ENCODE measurements at regions of chr5 and their contacts with region 1.

Region 1: DNA sequence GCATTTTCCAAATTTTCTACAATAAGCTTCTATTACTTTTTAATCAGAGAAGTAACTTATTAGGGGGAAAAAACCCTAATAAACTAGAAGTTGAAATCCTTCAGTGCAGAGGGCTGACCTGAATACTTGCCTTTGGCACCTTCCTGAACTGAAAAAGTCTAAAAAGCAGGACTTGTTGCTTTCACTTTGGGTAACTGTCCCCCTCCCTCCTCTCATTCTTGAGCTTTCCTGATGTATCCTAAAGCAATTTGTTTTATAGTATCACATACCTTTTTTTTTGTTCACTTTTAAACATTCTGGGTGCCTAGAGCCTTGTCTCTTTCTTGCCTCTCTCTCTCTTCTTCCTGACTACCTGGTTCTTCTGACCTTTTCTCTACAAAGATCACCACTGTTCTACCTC is 64.0 kb upstream of the ERBIN start:
- DNase-seq: no peak
- ATAC-seq: no peak
- H3K4me3 ChIP-seq: no peak overlapping the region
- H3K27ac ChIP-seq: no peak overlapping the region; the same call in 1 of the 2 replicates
- H3K4me1 ChIP-seq: peaks cover 3% of the 10 kb centered on the region; the same call in 1 of the 2 replicates
- H3K27me3 ChIP-seq: no peaks in the 10 kb centered on the region
- CTCF ChIP-seq: no peak

Region 2: GRCh38 chr5:65880496-65881072 is 18.2 kb after region 1 on chr5:
- CTCF ChIA-PET with region 1: no interaction called
- POLR2A ChIA-PET with region 1: interaction called, 15 read pairs
- in situ Hi-C with region 1: no loop called
- intact Hi-C with region 1: no loop called
- DNase-seq: no peak
- ATAC-seq: no peak
- H3K4me3 ChIP-seq: no peak overlapping the region
- H3K27ac ChIP-seq: no peak overlapping the region
- H3K4me1 ChIP-seq: no peaks in the 10 kb centered on the region
- H3K27me3 ChIP-seq: no peaks in the 10 kb centered on the region
- CTCF ChIP-seq: no peak

Measured in Panc1 (cell line).